Mammary epithelial cell (primary cell): ENCODE measurements at regions of chr16 and their contacts with region 1.

Region 1: GRCh38 chr16:70267516-70267915 is 15.8 kb upstream of the EXOSC6 start:
- DNase-seq: peak; percentile 21
- H3K4me3 ChIP-seq: no peak overlapping the region
- H3K27ac ChIP-seq: no peak overlapping the region
- H3K4me1 ChIP-seq: peaks cover 5% of the 10 kb centered on the region
- H3K27me3 ChIP-seq: no peaks in the 10 kb centered on the region
- CTCF ChIP-seq: peak; percentile 56 to 59

Region 2: GRCh38 chr16:70306880-70307279 is 39.4 kb after region 1 on chr16:
- CTCF ChIA-PET with region 1: interaction called, 10 read pairs
- dilution Hi-C with region 1: no loop called
- in situ Hi-C with region 1: no loop called
- intact Hi-C with region 1: no loop called
- DNase-seq: no peak
- H3K4me3 ChIP-seq: no peak overlapping the region
- H3K27ac ChIP-seq: no peak overlapping the region
- H3K4me1 ChIP-seq: peaks cover 6% of the 10 kb centered on the region
- H3K27me3 ChIP-seq: no peaks in the 10 kb centered on the region
- CTCF ChIP-seq: no peak

Region 3: DNA sequence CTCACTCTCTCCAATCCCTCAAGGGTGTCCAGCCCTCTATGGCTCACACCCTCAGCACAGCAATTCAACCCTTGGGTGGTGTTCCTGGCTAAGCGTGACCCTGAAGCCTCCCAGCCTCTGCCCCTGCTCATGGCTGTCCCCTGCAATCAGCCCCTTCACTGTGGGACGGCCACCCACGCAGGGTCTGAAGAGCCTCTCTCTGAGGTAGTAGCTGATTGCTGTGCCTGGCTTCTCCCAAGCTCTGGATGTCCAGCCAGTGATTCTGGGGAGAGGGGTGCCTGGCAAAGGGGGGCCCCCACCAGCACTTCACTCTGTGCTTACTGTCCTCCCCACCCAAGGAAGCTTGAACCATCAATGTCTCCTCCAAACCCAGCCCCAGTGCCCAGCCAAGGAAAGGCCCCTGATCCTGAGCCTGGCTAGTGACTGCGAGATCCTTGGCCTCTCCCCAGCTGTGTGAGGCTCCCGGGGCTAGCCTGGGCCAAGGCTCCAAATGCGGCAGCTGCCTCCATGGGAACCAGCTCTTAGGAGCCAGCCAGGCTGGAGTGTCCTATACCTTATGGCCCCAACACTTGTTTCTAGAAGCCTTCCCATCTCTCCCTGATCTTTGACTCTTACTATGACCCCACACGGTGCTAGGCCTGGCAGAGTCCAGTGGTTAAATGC is 408.5 kb after region 1 on chr16:
- CTCF ChIA-PET with region 1: no interaction called
- dilution Hi-C with region 1: no loop called
- in situ Hi-C with region 1: no loop called
- intact Hi-C with region 1: no loop called
- DNase-seq: no peak
- H3K4me3 ChIP-seq: no peak overlapping the region
- H3K27ac ChIP-seq: no peak overlapping the region
- H3K4me1 ChIP-seq: peaks cover 8% of the 10 kb centered on the region
- H3K27me3 ChIP-seq: no peaks in the 10 kb centered on the region
- CTCF ChIP-seq: no peak